ENCODE measurements at regions of chr6 and their contacts with region 1.

Region 1: DNA sequence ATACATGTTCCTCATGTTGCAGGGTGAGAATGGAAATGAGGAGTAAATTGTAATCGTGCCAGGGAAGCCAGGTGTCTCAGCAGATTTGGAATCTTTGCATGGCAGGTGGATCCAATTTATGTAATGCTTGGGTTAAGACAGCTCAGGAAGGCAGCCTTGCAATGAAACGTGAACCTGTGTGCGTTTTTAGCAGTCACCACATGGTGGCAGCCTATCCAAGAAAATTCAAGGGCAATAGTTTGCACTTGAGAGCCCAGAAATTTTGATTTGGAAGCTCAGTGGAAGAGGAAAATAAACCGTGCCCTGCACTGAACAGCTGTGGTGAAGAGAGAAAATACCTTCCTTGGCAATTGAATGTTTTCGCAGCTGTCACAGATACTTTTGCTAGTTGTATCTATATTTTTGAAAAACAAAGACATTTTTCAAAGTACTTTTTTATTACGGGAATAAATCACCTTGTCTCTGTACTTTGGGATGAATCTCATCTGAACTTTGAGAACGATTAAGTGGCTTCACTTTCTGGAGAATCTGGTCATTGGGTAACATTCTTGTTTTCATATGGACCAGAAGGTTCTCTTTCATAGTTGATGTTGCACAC is 26.5 kb downstream of the MTHFD1L start:
- DNase-seq: peak; percentile 45
- CTCF ChIP-seq: peak; percentile 82

Region 2: GRCh38 chr6:150767571-150768018 is 124.4 kb before region 1 on chr6:
- CTCF ChIA-PET with region 1: no interaction called
- POLR2A ChIA-PET with region 1: no interaction called
- DNase-seq: no peak
- CTCF ChIP-seq: no peak

Region 3: DNA sequence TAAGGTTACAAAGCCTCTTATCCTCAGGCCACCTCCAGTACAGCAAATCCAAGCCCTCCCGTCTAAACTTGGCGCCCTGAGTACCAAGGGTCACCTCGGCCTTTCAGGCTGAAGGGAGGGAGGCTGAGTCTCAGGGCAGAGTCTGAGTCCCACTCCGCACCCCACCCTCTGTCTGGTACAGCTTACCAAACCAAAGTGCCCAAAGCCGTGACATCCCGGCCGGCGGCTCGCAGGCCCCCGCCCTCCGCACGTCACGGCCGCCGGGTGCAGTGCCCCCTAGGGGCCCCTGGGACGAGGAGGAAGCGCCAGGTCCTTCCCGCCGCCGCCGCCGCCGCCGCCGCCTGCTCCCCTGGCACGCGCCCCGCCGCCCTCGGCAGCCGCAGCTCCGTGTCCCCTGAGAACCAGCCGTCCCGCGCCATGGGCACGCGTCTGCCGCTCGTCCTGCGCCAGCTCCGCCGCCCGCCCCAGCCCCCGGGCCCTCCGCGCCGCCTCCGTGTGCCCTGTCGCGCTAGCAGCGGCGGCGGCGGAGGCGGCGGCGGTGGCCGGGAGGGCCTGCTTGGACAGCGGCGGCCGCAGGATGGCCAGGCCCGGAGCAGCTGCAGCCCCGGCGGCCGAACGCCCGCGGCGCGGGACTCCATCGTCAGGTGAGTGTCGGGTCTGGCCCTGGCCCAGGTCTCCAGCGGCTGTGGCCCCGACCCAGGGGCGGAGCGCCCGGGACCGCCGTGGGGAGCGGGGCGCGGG is 26.4 kb before region 1 on chr6 and contains the start of gene MTHFD1L:
- CTCF ChIA-PET with region 1: interaction called, 66 read pairs
- POLR2A ChIA-PET with region 1: interaction called, 7 read pairs
- DNase-seq: peak; percentile 89
- CTCF ChIP-seq: peak; percentile 81

Region 4: GRCh38 chr6:150905769-150906506 is 14.0 kb after region 1 on chr6:
- CTCF ChIA-PET with region 1: interaction called, 88 read pairs
- POLR2A ChIA-PET with region 1: no interaction called
- DNase-seq: no peak
- CTCF ChIP-seq: peak; percentile 17

Region 5: GRCh38 chr6:150934380-150934779 is 42.4 kb after region 1 on chr6:
- CTCF ChIA-PET with region 1: interaction called, 44 read pairs
- POLR2A ChIA-PET with region 1: no interaction called
- DNase-seq: no peak
- CTCF ChIP-seq: no peak

Region 6: DNA sequence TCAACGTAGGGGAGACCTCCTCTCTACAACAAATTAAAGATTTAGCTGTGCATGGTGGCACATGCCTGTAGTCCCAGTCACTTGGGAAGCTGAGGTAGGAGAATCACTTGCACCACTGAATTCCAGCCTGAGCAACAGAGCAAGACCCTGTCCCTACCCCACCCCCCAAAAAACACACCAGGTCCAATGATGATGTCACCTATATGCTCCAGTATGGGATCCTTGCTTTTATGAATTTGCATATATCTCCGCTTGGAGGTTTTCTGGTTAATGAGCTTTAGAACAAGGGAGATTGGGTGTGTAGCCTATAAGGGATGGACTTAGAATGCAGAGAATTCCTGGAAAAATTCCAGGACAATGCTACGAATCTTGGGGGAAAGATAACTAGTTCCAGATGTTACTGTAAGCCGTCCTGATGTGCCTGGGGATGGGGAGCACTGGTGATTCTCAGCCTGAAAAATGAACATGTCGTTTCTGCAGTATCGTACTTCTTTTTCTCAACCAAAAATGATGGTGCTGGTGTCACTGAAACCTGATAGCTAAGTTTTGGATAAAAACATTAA is 438.2 kb after region 1 on chr6:
- CTCF ChIA-PET with region 1: interaction called, 373 read pairs
- POLR2A ChIA-PET with region 1: no interaction called
- DNase-seq: no peak
- CTCF ChIP-seq: no peak

Measured in GM10248 (cell line).